ENCODE measurements at regions of chr16 and their contacts with region 1.

Region 1: GRCh38 chr16:19389246-19389645 is 28.4 kb upstream of the TMC5 start:
- DNase-seq: peak in 6 of 10 donors; percentile 15 to 83 (median 32)

Region 2: GRCh38 chr16:19502395-19503131 is 113.3 kb after region 1 on chr16:
- intact Hi-C with region 1: loop called (anchors 10 kb)
- DNase-seq: peak in 8 of 10 donors; percentile 53 to 94 (median 82)

Measured in posterior cingulate gyrus (tissue), 11 donors.